ENCODE measurements at regions of chr6 and their contacts with region 1.

Region 1: DNA sequence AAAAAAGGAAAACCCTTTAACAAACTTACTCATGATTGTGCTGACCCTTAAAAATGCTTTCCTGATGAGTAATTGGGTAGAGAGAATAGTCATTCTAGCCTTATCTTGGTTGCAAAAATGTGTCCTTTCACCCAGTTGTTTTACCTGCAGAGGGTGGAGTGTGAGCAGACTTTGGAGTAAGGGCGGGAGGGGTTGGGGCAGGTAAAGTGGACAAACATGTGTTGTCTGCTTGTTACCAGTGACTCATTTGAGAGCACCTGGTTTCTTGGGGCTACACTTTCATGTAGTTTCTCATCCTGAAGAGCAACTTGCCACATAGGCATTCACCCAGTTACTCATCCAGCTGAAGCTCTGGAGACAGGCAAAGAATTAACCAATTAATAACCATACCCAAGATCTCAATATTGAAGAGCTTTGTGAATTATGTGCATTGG is 121.1 kb downstream of the TNFRSF21 start:
- DNase-seq: peak; percentile 82 to 94
- H3K4me3 ChIP-seq: no peak overlapping the region
- H3K4me3 Mint-ChIP-seq: peak overlapping the region; percentile 23
- H3K27ac Mint-ChIP-seq: peak overlapping the region; percentile 96
- H3K4me1 ChIP-seq: peaks cover 38% of the 10 kb centered on the region
- H3K4me1 Mint-ChIP-seq: peaks cover 36% of the 10 kb centered on the region
- H3K27me3 ChIP-seq: no peaks in the 10 kb centered on the region
- H3K27me3 Mint-ChIP-seq: no peaks in the 10 kb centered on the region
- CTCF ChIP-seq: no peak

Region 2: GRCh38 chr6:47097092-47097945 is 91.3 kb before region 1 on chr6:
- CTCF ChIA-PET with region 1: no interaction called
- POLR2A ChIA-PET with region 1: no interaction called
- intact Hi-C with region 1: loop called (anchors 1 kb)
- DNase-seq: peak; percentile 71 to 78
- H3K4me3 ChIP-seq: no peak overlapping the region
- H3K4me3 Mint-ChIP-seq: no peak overlapping the region
- H3K27ac Mint-ChIP-seq: no peak overlapping the region
- H3K4me1 ChIP-seq: peaks cover 54% of the 10 kb centered on the region
- H3K4me1 Mint-ChIP-seq: peaks cover 25% of the 10 kb centered on the region
- H3K27me3 ChIP-seq: no peaks in the 10 kb centered on the region
- H3K27me3 Mint-ChIP-seq: no peaks in the 10 kb centered on the region
- CTCF ChIP-seq: peak; percentile 77 to 80

Region 3: GRCh38 chr6:47134476-47135189 is 54.0 kb before region 1 on chr6:
- CTCF ChIA-PET with region 1: no interaction called
- POLR2A ChIA-PET with region 1: no interaction called
- intact Hi-C with region 1: loop called (anchors 1 kb)
- DNase-seq: peak; percentile 54 to 61
- H3K4me3 ChIP-seq: no peak overlapping the region
- H3K4me3 Mint-ChIP-seq: peak overlapping the region; percentile 52
- H3K27ac Mint-ChIP-seq: peak overlapping the region; percentile 81
- H3K4me1 ChIP-seq: peaks cover 53% of the 10 kb centered on the region
- H3K4me1 Mint-ChIP-seq: peaks cover 48% of the 10 kb centered on the region
- H3K27me3 ChIP-seq: no peaks in the 10 kb centered on the region
- H3K27me3 Mint-ChIP-seq: no peaks in the 10 kb centered on the region
- CTCF ChIP-seq: no peak

Region 4: GRCh38 chr6:47230579-47230978 is 42.0 kb after region 1 on chr6:
- CTCF ChIA-PET with region 1: no interaction called
- POLR2A ChIA-PET with region 1: no interaction called
- intact Hi-C with region 1: loop called (anchors 2 kb)
- DNase-seq: peak in 1 of 2 experiments; percentile 33
- H3K4me3 ChIP-seq: no peak overlapping the region
- H3K4me3 Mint-ChIP-seq: no peak overlapping the region
- H3K27ac Mint-ChIP-seq: no peak overlapping the region
- H3K4me1 ChIP-seq: peaks cover 33% of the 10 kb centered on the region
- H3K4me1 Mint-ChIP-seq: peaks cover 22% of the 10 kb centered on the region
- H3K27me3 ChIP-seq: no peaks in the 10 kb centered on the region
- H3K27me3 Mint-ChIP-seq: no peaks in the 10 kb centered on the region
- CTCF ChIP-seq: no peak

Region 5: DNA sequence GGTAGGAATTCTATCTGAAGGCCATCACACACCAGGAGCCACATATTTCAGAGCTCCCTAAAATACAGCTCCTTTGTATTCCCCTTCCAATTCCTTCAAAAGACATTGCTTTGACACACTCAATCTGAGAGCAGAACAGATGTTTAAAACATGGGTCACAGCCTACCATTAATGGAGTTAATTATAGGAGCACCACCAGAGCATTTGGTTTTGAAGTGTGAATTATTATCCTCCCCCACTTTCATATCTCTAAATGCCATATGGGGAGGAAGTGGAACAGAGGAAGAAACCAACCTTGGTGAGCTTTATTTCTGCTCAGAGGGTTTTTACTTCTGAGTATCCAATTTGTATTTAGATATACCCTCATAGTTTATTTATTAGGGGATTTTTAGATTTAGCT is 171.8 kb after region 1 on chr6:
- CTCF ChIA-PET with region 1: no interaction called
- POLR2A ChIA-PET with region 1: no interaction called
- intact Hi-C with region 1: loop called (anchors 5 kb)
- DNase-seq: no peak
- H3K4me3 ChIP-seq: no peak overlapping the region
- H3K4me3 Mint-ChIP-seq: no peak overlapping the region
- H3K27ac Mint-ChIP-seq: no peak overlapping the region
- H3K4me1 ChIP-seq: peaks cover 21% of the 10 kb centered on the region
- H3K4me1 Mint-ChIP-seq: peaks cover 19% of the 10 kb centered on the region
- H3K27me3 ChIP-seq: no peaks in the 10 kb centered on the region
- H3K27me3 Mint-ChIP-seq: no peaks in the 10 kb centered on the region
- CTCF ChIP-seq: no peak